ENCODE measurements at regions of chr2 and their contacts with region 1.

Region 1: GRCh38 chr2:8544786-8545694 is 136.8 kb upstream of the ID2 start:
- DNase-seq: peak; percentile 99

Region 2: GRCh38 chr2:7427293-7428060 is 1117.6 kb before region 1 on chr2:
- in situ Hi-C with region 1: loop called (anchors 25 kb)
- DNase-seq: peak; percentile 71

Measured in KBM-7 (cell line).